Ovary (tissue), 10 donors: ENCODE measurements at regions of chr3 and their contacts with region 1.

Region 1: GRCh38 chr3:113241292-113242095 is 30.1 kb downstream of the BOC start:
- DNase-seq: peak in 3 of 5 donors; percentile 35 to 46 (median 39)
- H3K4me3 ChIP-seq: peak overlapping the region; percentile 4
- H3K27ac ChIP-seq: peak overlapping the region; percentile 9 to 72
- H3K4me1 ChIP-seq: peaks cover 27% of the 10 kb centered on the region
- H3K27me3 ChIP-seq: no peaks in the 10 kb centered on the region
- CTCF ChIP-seq: no peak
- EP300 ChIP-seq: no peak
- POLR2A ChIP-seq: no peak

Region 2: DNA sequence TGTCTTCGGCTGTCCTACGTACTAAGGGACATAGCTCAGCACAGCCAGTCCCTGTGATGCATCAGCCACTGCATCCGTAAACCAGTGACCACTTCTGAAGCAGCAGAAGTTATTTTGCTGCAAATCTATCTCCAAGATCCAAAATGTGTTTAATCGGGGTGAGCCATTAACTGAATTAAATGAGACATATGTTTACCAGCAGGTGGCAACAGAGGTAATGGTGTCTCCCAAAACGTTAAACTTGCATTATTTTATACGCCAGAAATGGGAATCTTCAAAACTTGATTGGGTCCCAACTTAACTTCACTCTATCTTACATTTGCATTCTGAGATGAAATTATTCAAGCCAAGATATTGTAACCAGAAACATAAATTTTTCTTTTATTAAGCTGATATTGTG is 105.4 kb before region 1 on chr3:
- intact Hi-C with region 1: no loop called
- DNase-seq: no peak
- H3K4me3 ChIP-seq: no peak overlapping the region
- H3K27ac ChIP-seq: no peak overlapping the region
- H3K4me1 ChIP-seq: peaks cover 1% of the 10 kb centered on the region
- H3K27me3 ChIP-seq: no peaks in the 10 kb centered on the region
- CTCF ChIP-seq: peak; percentile 62 to 80 (median 69)
- EP300 ChIP-seq: no peak
- POLR2A ChIP-seq: no peak

Region 3: GRCh38 chr3:113275929-113276750 is 34.6 kb after region 1 on chr3:
- intact Hi-C with region 1: loop called in 1 of 4 experiments (anchors 5 kb)
- DNase-seq: peak in 3 of 5 donors; percentile 41 to 61 (median 42)
- H3K4me3 ChIP-seq: no peak overlapping the region
- H3K27ac ChIP-seq: peak overlapping the region; percentile 49 to 82
- H3K4me1 ChIP-seq: no peaks in the 10 kb centered on the region
- H3K27me3 ChIP-seq: no peaks in the 10 kb centered on the region
- CTCF ChIP-seq: peak in 1 of 3 donors; percentile 16
- EP300 ChIP-seq: no peak
- POLR2A ChIP-seq: no peak

Region 4: DNA sequence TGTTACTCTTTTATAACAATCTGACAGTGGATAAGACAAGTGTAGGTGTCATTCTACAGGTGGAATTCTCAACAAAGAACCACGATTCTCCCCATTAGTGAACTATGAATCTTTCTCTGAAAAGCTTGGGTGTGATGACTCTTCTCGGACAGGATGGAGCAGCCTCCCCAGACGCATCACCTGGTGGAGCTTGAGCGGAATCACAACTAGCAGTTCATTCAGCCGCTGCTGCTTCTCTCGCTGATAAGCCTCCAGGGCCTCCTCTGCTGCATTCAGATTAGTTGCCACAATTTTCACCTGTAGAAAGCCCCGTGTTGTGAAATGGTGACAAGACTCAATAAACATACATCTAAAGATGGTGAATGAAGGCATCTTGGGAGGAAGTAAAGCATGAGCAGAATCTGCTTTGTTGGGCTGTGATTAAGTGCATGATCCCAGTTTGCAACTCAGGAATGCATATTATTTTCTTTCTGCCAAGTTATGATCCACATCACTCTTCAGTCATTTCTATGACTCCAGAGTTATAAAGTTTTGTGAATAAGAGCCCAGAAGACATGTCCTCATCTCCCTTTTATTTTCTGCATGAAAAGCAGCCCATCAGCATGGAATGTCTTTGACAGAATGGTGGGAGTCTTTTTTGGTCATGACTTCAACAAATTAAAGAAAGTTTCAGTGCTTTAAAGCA is 63.5 kb after region 1 on chr3:
- intact Hi-C with region 1: no loop called
- DNase-seq: no peak
- H3K4me3 ChIP-seq: no peak overlapping the region
- H3K27ac ChIP-seq: no peak overlapping the region
- H3K4me1 ChIP-seq: no peaks in the 10 kb centered on the region
- H3K27me3 ChIP-seq: no peaks in the 10 kb centered on the region
- CTCF ChIP-seq: no peak
- EP300 ChIP-seq: no peak
- POLR2A ChIP-seq: no peak